ENCODE measurements at regions of chr4 and their contacts with region 1.

Region 1: GRCh38 chr4:10403633-10404445 is 53.4 kb downstream of the ZNF518B start:
- DNase-seq: peak in 4 of 14 experiments; percentile 27 to 48 (median 41)
- ATAC-seq: no peak
- H3K4me3 ChIP-seq: no peak overlapping the region
- H3K4me3 Mint-ChIP-seq: no peak overlapping the region
- H3K27ac ChIP-seq: no peak overlapping the region
- H3K27ac Mint-ChIP-seq: no peak overlapping the region
- H3K4me1 ChIP-seq: no peaks in the 10 kb centered on the region
- H3K4me1 Mint-ChIP-seq: no peaks in the 10 kb centered on the region
- H3K27me3 ChIP-seq: no peaks in the 10 kb centered on the region
- H3K27me3 Mint-ChIP-seq: no peaks in the 10 kb centered on the region
- CTCF ChIP-seq: peak; percentile 46

Region 2: DNA sequence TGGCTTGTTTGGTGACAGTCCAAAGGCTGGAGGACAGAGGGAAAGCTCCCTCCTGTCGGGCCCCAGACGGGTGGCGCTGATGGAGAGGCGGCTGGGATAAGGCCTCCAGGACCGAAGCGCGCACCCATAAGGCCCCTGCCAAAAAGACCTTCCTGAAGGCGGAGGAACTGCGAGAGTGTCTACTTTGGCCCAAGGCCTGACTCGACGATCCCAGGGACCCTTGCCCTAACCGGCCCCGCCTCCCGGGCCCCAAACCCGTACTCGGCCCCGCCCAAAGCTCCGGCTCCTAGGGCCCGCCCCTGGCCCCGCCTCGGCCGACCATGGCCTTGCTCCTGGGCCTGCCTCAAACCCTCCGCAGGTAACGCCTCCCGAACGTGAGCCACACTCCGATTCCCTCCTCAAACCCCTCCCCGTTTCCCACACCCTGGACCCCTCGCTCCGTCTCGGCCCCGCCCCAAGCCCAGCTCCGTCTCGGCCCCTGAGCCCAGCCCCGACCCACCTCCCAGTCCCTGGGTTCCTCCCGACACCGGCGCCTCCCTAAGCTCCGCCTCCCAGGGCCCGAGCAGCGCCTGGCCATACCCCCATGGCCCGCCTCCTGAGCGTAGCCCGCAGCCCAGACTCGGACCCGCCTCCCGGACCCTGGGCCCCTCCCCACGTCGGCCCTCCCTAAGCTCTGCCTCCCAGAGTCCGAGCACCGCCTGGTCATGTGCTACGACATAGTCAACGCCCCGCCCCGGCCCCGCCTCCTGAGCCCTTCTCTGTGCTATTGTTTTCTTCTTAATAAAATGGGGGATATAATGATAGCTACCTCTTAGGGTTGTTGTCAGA is 712.4 kb before region 1 on chr4:
- CTCF ChIA-PET with region 1: no interaction called
- POLR2A ChIA-PET with region 1: no interaction called
- intact Hi-C with region 1: loop called in 1 of 2 experiments (anchors 5 kb)
- DNase-seq: peak; percentile 77 to 97 (median 88)
- ATAC-seq: peak; percentile 99
- H3K4me3 ChIP-seq: peak overlapping the region; percentile 72
- H3K4me3 Mint-ChIP-seq: peak overlapping the region; percentile 92
- H3K27ac ChIP-seq: peak overlapping the region; percentile 67 to 73
- H3K27ac Mint-ChIP-seq: peak overlapping the region; percentile 85
- H3K4me1 ChIP-seq: peaks cover 8% of the 10 kb centered on the region
- H3K4me1 Mint-ChIP-seq: peaks cover 26% of the 10 kb centered on the region
- H3K27me3 ChIP-seq: no peaks in the 10 kb centered on the region
- H3K27me3 Mint-ChIP-seq: no peaks in the 10 kb centered on the region
- CTCF ChIP-seq: no peak

Region 3: GRCh38 chr4:9704551-9705332 is 699.1 kb before region 1 on chr4:
- CTCF ChIA-PET with region 1: no interaction called
- POLR2A ChIA-PET with region 1: no interaction called
- intact Hi-C with region 1: loop called (anchors 5 to 10 kb)
- DNase-seq: no peak
- ATAC-seq: no peak
- H3K4me3 ChIP-seq: no peak overlapping the region
- H3K4me3 Mint-ChIP-seq: no peak overlapping the region
- H3K27ac ChIP-seq: no peak overlapping the region
- H3K27ac Mint-ChIP-seq: no peak overlapping the region
- H3K4me1 ChIP-seq: peaks cover 8% of the 10 kb centered on the region
- H3K4me1 Mint-ChIP-seq: peaks cover 17% of the 10 kb centered on the region
- H3K27me3 ChIP-seq: no peaks in the 10 kb centered on the region
- H3K27me3 Mint-ChIP-seq: no peaks in the 10 kb centered on the region
- CTCF ChIP-seq: no peak

Region 4: DNA sequence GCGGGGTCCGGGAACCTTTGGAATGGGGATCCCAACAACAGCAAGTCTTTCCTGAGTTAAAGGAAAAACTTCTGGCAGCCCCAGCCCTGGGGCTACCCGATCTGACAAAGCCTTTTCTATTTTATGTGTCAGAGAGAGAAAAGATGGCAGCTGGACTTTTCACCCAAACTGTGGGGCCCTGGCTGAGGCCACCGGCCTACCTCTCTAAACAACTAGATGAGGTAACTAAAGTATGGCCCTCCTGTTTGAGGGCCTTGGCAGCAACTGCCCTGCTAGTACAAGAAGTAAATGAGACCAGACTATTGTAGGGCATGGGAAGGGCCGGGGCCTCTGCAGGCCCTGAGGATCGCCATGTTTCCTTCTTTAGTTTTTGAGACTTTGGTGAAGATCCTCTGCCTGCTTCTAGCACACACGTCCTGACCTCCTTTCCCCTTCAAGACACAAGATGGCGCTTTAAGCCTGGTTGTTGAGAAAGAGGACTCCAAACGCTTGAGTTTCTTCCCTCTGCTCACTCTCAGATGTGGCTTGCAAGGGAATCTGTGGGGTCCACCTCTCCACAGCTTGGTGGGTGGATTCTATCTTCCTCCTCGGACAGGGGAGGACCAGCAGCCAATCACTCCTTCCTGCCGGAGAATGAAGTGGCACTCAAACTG is 640.9 kb before region 1 on chr4:
- CTCF ChIA-PET with region 1: no interaction called
- POLR2A ChIA-PET with region 1: no interaction called
- intact Hi-C with region 1: loop called in 1 of 2 experiments (anchors 1 kb)
- DNase-seq: peak in 6 of 14 experiments; percentile 13 to 65 (median 32)
- ATAC-seq: no peak
- H3K4me3 ChIP-seq: no peak overlapping the region
- H3K4me3 Mint-ChIP-seq: no peak overlapping the region
- H3K27ac ChIP-seq: no peak overlapping the region
- H3K27ac Mint-ChIP-seq: no peak overlapping the region
- H3K4me1 ChIP-seq: no peaks in the 10 kb centered on the region
- H3K4me1 Mint-ChIP-seq: no peaks in the 10 kb centered on the region
- H3K27me3 ChIP-seq: no peaks in the 10 kb centered on the region
- H3K27me3 Mint-ChIP-seq: peaks cover 20% of the 10 kb centered on the region
- CTCF ChIP-seq: peak; percentile 34

Region 5: DNA sequence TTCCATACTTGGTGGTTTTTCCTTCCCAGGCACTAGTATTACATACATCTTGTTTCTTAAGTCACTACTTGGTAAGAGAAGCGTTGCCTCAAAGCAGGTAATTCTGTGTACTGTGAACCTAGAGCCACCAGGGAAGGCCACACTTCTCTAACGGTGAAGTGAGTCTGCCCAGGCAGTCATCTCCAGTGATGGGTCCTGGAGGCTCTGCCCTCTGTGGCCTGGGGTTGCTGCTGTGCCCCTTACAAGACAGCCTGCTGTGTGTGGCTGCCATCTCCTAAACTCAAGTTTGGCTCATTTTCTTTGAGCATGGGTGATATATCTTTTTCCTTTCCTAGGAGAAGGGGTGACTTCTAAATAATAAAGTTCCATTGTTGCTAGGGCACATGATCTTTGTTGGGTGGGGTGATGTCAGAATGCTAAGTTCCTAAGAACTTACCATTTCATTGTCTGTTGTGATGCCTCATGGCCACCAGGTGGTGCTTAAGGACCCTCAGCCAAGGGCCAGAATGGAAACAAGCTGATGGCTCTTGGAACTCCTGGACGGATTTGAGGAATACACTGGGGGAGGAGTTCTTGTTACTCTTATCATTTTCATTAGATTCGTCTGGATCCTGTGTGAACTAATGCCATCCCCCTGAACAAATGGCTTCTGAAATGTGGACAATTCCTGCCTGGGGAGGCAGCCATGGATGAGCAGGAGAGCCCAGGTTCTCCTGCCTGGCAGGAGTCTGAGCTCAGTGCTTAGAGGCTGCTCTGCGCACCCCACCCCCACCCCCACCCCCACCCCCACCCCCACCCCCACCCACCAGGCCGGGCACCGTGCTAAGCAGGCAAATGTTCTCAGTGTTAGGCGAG is 246.1 kb before region 1 on chr4:
- CTCF ChIA-PET with region 1: no interaction called
- POLR2A ChIA-PET with region 1: no interaction called
- intact Hi-C with region 1: loop called (anchors 5 to 10 kb)
- DNase-seq: peak in 9 of 14 experiments; percentile 4 to 68 (median 40)
- ATAC-seq: peak; percentile 38
- H3K4me3 ChIP-seq: no peak overlapping the region
- H3K4me3 Mint-ChIP-seq: no peak overlapping the region
- H3K27ac ChIP-seq: no peak overlapping the region
- H3K27ac Mint-ChIP-seq: peak overlapping the region; percentile 65
- H3K4me1 ChIP-seq: peaks cover 36% of the 10 kb centered on the region
- H3K4me1 Mint-ChIP-seq: peaks cover 37% of the 10 kb centered on the region
- H3K27me3 ChIP-seq: no peaks in the 10 kb centered on the region
- H3K27me3 Mint-ChIP-seq: no peaks in the 10 kb centered on the region
- CTCF ChIP-seq: peak; percentile 67

Region 6: GRCh38 chr4:10164877-10165283 is 239.0 kb before region 1 on chr4:
- CTCF ChIA-PET with region 1: no interaction called
- POLR2A ChIA-PET with region 1: no interaction called
- intact Hi-C with region 1: loop called in 1 of 2 experiments (anchors 10 kb)
- DNase-seq: peak in 1 of 14 experiments; percentile 19
- ATAC-seq: no peak
- H3K4me3 ChIP-seq: no peak overlapping the region
- H3K4me3 Mint-ChIP-seq: no peak overlapping the region
- H3K27ac ChIP-seq: no peak overlapping the region
- H3K27ac Mint-ChIP-seq: no peak overlapping the region
- H3K4me1 ChIP-seq: peaks cover 32% of the 10 kb centered on the region
- H3K4me1 Mint-ChIP-seq: peaks cover 21% of the 10 kb centered on the region
- H3K27me3 ChIP-seq: no peaks in the 10 kb centered on the region
- H3K27me3 Mint-ChIP-seq: no peaks in the 10 kb centered on the region
- CTCF ChIP-seq: peak; percentile 61

Region 7: GRCh38 chr4:10296730-10297129 is 107.1 kb before region 1 on chr4:
- CTCF ChIA-PET with region 1: no interaction called
- POLR2A ChIA-PET with region 1: no interaction called
- intact Hi-C with region 1: no loop called
- DNase-seq: no peak
- ATAC-seq: no peak
- H3K4me3 ChIP-seq: no peak overlapping the region
- H3K4me3 Mint-ChIP-seq: no peak overlapping the region
- H3K27ac ChIP-seq: no peak overlapping the region
- H3K27ac Mint-ChIP-seq: no peak overlapping the region
- H3K4me1 ChIP-seq: no peaks in the 10 kb centered on the region
- H3K4me1 Mint-ChIP-seq: no peaks in the 10 kb centered on the region
- H3K27me3 ChIP-seq: peaks cover 0 to 4% of the 10 kb centered on the region in 2 experiments
- H3K27me3 Mint-ChIP-seq: peaks cover 10% of the 10 kb centered on the region
- CTCF ChIP-seq: no peak

Region 8: GRCh38 chr4:10384974-10385373 is 18.9 kb before region 1 on chr4:
- CTCF ChIA-PET with region 1: no interaction called
- POLR2A ChIA-PET with region 1: no interaction called
- intact Hi-C with region 1: loop called (anchors 1 kb)
- DNase-seq: no peak
- ATAC-seq: no peak
- H3K4me3 ChIP-seq: no peak overlapping the region
- H3K4me3 Mint-ChIP-seq: no peak overlapping the region
- H3K27ac ChIP-seq: no peak overlapping the region
- H3K27ac Mint-ChIP-seq: no peak overlapping the region
- H3K4me1 ChIP-seq: no peaks in the 10 kb centered on the region
- H3K4me1 Mint-ChIP-seq: no peaks in the 10 kb centered on the region
- H3K27me3 ChIP-seq: no peaks in the 10 kb centered on the region
- H3K27me3 Mint-ChIP-seq: peaks cover 4% of the 10 kb centered on the region
- CTCF ChIP-seq: no peak

Measured in CD4-positive, alpha-beta T cell (primary cell).